Cardiac septum (tissue), 1 donor: ENCODE measurements at regions of chr5 and their contacts with region 1.

Region 1: GRCh38 chr5:9156282-9156681 is 389.6 kb downstream of the SEMA5A start:
- DNase-seq: no peak

Region 2: GRCh38 chr5:9617221-9617620 is 460.9 kb after region 1 on chr5:
- intact Hi-C with region 1: loop called (anchors 10 kb)
- DNase-seq: no peak